ENCODE measurements at regions of chrX and their contacts with region 1.

Region 1: GRCh38 chrX:39896951-39897740 is 200.6 kb downstream of the BCOR start:
- DNase-seq: peak in 3 of 5 donors; percentile 35 to 62 (median 49)
- ATAC-seq: peak; percentile 21 to 78 (median 77)
- H3K4me3 ChIP-seq: no peak overlapping the region
- H3K27ac ChIP-seq: peak overlapping the region in 5 of 12 donors; percentile 19 to 50 (median 42)
- H3K4me1 ChIP-seq: peaks cover 0 to 38% (median 9%) of the 10 kb centered on the region in 12 donors
- H3K27me3 ChIP-seq: peaks cover 0 to 17% (median 0%) of the 10 kb centered on the region in 9 donors
- CTCF ChIP-seq: peak in 4 of 12 donors; percentile 5 to 25 (median 17)
- POLR2A ChIP-seq: no peak

Region 2: DNA sequence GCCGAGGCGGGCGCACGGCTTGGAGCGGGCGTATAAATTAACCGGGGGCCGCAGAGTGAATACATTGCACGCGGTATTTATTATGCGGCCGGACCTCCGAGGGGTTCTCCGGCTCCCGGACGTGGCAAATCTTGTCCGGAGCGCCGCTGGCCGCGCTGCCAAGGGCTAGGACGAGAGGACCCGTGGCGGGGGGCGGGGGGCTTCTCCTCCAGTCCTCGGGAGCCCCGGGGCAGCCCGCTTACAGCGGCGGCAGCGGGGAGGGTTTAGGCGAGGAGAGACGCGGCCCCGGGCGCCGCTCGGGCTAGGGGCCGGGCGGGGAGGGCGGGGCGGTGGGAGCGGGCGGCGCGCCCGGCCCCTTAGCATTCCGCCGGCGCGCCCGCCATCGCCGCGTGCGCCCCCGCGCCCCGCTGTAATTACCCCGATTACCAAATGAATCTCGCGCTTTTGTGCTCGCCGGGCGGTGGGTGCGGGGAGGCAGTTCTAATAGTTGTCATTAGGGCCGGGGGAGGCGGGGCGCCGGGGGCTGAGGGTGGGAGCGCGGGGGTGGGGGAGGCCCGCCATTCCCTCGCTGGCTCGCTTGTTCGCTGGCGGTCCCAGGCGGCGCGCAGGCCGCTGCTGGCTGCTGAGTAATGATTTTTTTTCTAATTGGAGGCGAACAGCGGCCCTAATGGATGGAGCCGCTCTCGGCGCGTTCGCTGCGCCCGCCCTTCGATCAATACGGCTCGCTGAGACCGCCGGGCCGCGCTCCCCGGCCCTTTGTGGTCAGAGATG is 76.0 kb before region 1 on chrX:
- intact Hi-C with region 1: loop called in 3 of 10 experiments (anchors 10 kb)
- DNase-seq: peak in 4 of 5 donors; percentile 25 to 62 (median 40)
- ATAC-seq: peak in 1 of 4 donors; percentile 68
- H3K4me3 ChIP-seq: peak overlapping the region; percentile 17 to 57 (median 48)
- H3K27ac ChIP-seq: peak overlapping the region in 2 of 12 donors; percentile 33 to 45
- H3K4me1 ChIP-seq: peaks cover 0 to 21% (median 5%) of the 10 kb centered on the region in 12 donors
- H3K27me3 ChIP-seq: peaks cover 0 to 60% (median 0%) of the 10 kb centered on the region in 9 donors
- CTCF ChIP-seq: no peak
- POLR2A ChIP-seq: no peak

Region 3: GRCh38 chrX:39836802-39837420 is 60.2 kb before region 1 on chrX:
- intact Hi-C with region 1: loop called in 1 of 10 experiments (anchors 10 kb)
- DNase-seq: no peak
- ATAC-seq: peak in 3 of 4 donors; percentile 23 to 60 (median 54)
- H3K4me3 ChIP-seq: no peak overlapping the region
- H3K27ac ChIP-seq: no peak overlapping the region
- H3K4me1 ChIP-seq: peaks cover 0 to 4% (median 0%) of the 10 kb centered on the region in 12 donors
- H3K27me3 ChIP-seq: peaks cover 0 to 14% (median 0%) of the 10 kb centered on the region in 9 donors
- CTCF ChIP-seq: no peak
- POLR2A ChIP-seq: no peak

Region 4: DNA sequence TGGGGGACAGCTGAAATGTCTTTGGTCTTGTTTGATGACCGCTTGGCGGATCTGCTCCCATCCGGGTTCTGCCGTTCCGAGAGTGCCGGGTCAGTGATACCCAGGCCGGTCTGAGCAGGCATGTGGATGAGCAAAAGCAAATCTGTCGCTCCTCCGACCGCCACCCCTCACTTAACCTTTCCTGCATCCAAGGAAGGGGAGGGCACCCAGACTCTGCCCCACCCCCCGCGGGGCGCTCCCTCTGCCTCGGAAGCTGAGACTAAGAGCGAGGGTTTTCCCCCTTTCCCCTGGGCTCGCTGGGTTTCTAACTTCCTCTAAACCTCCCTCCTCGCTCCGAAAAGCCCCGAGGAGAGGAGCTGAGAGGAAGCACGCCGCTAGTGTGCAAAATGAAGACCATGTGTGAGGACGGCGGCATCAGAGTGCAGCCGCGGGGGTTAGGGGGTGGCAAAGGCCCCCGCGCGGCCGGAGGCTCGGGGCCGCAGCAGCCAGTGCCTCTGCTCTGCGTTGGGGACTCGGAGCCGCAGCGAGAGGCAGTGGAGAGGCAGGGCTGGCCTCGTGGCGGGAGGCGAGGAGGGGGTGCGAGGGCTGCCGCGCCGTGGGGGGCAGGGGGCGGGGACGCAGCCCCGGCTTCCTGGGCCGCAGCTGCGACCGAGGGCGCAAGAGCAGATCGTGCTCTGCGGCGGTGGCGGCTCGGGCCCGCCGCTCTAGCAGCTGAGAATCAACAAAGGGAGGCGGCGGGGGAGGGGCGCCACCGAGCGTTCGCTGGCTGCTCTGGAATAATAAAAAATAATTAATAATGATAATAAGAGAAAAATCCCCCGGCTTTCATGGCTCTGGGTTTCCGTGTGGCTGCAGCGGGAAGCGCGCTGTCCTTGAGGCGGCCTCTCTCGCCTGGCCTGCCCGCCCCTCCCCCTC is 256.4 kb after region 1 on chrX:
- intact Hi-C with region 1: loop called in 1 of 10 experiments (anchors 10 kb)
- DNase-seq: peak in 4 of 5 donors; percentile 37 to 70 (median 62)
- ATAC-seq: peak in 3 of 4 donors; percentile 3 to 22 (median 21)
- H3K4me3 ChIP-seq: peak overlapping the region; percentile 21 to 63 (median 50)
- H3K27ac ChIP-seq: peak overlapping the region; percentile 65 to 89 (median 81)
- H3K4me1 ChIP-seq: peaks cover 0 to 78% (median 29%) of the 10 kb centered on the region in 12 donors
- H3K27me3 ChIP-seq: peaks cover 0 to 96% (median 0%) of the 10 kb centered on the region in 9 donors
- CTCF ChIP-seq: peak in 6 of 12 donors; percentile 9 to 37 (median 27)
- POLR2A ChIP-seq: no peak

Region 5: DNA sequence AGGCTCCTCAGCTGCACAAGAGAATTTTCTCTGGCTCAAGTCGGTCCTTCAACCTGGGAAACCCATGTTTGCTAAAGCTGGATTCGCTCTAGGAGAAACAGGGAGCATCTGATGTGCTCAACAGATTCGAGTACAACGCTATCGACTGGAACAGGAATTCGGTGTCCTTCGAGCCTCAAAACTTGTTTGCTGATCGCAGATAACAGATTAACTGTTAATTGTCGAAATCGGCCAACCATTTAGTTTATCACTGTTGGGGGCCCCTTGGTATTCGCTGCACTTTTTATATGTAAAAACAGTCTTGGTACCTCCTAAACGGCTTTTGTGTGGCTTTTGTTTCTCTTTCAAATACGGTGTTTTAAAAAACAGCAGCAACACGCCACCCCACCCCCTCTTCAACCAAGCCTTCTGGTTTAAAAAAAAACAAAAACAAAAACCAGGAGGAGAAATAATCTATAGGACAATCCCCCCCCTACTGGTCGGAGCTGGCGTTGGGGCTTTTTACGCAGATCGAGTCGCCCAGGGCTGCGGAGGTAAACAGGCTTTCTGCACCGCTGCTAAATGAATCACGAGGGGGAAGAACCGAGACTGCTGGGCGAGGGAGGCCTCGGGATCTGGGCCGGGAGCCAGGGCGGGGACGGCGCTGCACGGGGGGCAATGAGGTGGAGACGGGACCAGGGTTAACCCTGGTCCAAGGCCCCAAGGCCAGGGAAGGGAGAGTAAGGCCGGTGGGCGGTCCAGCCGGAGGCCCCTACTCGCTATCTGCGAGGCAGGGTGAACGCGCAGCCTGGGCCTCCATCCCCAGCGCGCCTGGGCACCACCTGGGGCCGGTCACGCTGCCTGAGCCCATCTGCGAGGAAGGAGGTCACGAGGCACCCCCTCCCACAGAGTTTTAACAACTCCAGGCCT is 272.3 kb after region 1 on chrX:
- intact Hi-C with region 1: loop called in 1 of 10 experiments (anchors 10 kb)
- DNase-seq: peak in 4 of 5 donors; percentile 34 to 75 (median 46)
- ATAC-seq: no peak
- H3K4me3 ChIP-seq: peak overlapping the region in 2 of 12 donors; percentile 19 to 43
- H3K27ac ChIP-seq: peak overlapping the region in 2 of 12 donors; percentile 74 to 76
- H3K4me1 ChIP-seq: peaks cover 0 to 56% (median 19%) of the 10 kb centered on the region in 12 donors
- H3K27me3 ChIP-seq: peaks cover 0 to 81% (median 0%) of the 10 kb centered on the region in 9 donors
- CTCF ChIP-seq: peak in 8 of 12 donors; percentile 15 to 35 (median 23)
- POLR2A ChIP-seq: no peak